Caco-2 (cell line): ENCODE measurements at regions of chr2 and their contacts with region 1.

Region 1: GRCh38 chr2:108927936-108928659 is 60.9 kb downstream of the EDAR start:
- DNase-seq: peak; percentile 60 to 71
- H3K4me3 ChIP-seq: no peak overlapping the region
- H3K4me3 Mint-ChIP-seq: no peak overlapping the region
- H3K27ac Mint-ChIP-seq: no peak overlapping the region
- H3K4me1 ChIP-seq: no peaks in the 10 kb centered on the region
- H3K4me1 Mint-ChIP-seq: peaks cover 8% of the 10 kb centered on the region
- H3K27me3 ChIP-seq: no peaks in the 10 kb centered on the region
- H3K27me3 Mint-ChIP-seq: no peaks in the 10 kb centered on the region
- CTCF ChIP-seq: peak; percentile 82 to 93

Region 2: GRCh38 chr2:108988796-108989713 is 61.0 kb after region 1 on chr2 and contains the start of gene EDAR:
- CTCF ChIA-PET with region 1: interaction called, 4 read pairs
- POLR2A ChIA-PET with region 1: no interaction called
- intact Hi-C with region 1: loop called (anchors 1 kb)
- DNase-seq: peak; percentile 76 to 82
- H3K4me3 ChIP-seq: peak within 1 kb of the TSS; percentile 31
- H3K4me3 Mint-ChIP-seq: peak within 1 kb of the TSS; percentile 71
- H3K27ac Mint-ChIP-seq: no peak within 1 kb of the TSS
- H3K4me1 ChIP-seq: peaks cover 30% of the 10 kb centered on the region
- H3K4me1 Mint-ChIP-seq: peaks cover 34% of the 10 kb centered on the region
- H3K27me3 ChIP-seq: no peaks in the 10 kb centered on the region
- H3K27me3 Mint-ChIP-seq: no peaks in the 10 kb centered on the region
- CTCF ChIP-seq: peak; percentile 67 to 92
- total RNA-seq, gene EDAR: 0.82 and 0.95 TPM in 2 replicates

Region 3: DNA sequence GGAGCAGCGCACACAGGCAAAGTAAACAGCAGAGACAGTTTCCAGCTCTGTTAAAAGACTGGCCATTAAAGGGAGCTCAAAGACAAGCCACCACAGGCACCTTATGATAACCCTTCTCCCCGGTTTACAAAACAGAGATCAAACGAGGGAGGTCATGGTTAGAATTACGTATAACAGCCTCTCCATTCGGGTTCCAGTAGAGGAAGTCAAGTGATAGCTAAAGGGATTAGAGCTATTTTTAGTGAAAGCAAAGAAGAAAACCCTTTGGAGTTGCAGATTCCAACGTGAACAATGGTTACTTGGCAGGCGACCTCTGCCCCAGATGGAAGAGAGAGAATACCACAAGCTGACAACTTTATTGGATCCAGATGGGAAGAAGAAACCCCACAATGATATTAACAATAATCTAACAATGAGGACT is 92.1 kb after region 1 on chr2:
- CTCF ChIA-PET with region 1: no interaction called
- POLR2A ChIA-PET with region 1: no interaction called
- intact Hi-C with region 1: no loop called
- DNase-seq: peak; percentile 45 to 47
- H3K4me3 ChIP-seq: no peak overlapping the region
- H3K4me3 Mint-ChIP-seq: peak overlapping the region; percentile 19
- H3K27ac Mint-ChIP-seq: peak overlapping the region; percentile 26
- H3K4me1 ChIP-seq: peaks cover 31% of the 10 kb centered on the region
- H3K4me1 Mint-ChIP-seq: peaks cover 10% of the 10 kb centered on the region
- H3K27me3 ChIP-seq: no peaks in the 10 kb centered on the region
- H3K27me3 Mint-ChIP-seq: no peaks in the 10 kb centered on the region
- CTCF ChIP-seq: no peak

Region 4: GRCh38 chr2:109062859-109063700 is 135.0 kb after region 1 on chr2:
- CTCF ChIA-PET with region 1: no interaction called
- POLR2A ChIA-PET with region 1: no interaction called
- intact Hi-C with region 1: loop called (anchors 5 kb)
- DNase-seq: peak in 1 of 2 experiments; percentile 18
- H3K4me3 ChIP-seq: no peak overlapping the region
- H3K4me3 Mint-ChIP-seq: no peak overlapping the region
- H3K27ac Mint-ChIP-seq: peak overlapping the region; percentile 75
- H3K4me1 ChIP-seq: peaks cover 67% of the 10 kb centered on the region
- H3K4me1 Mint-ChIP-seq: peaks cover 45% of the 10 kb centered on the region
- H3K27me3 ChIP-seq: no peaks in the 10 kb centered on the region
- H3K27me3 Mint-ChIP-seq: no peaks in the 10 kb centered on the region
- CTCF ChIP-seq: no peak

Region 5: GRCh38 chr2:109208081-109208950 is 280.2 kb after region 1 on chr2:
- CTCF ChIA-PET with region 1: no interaction called
- POLR2A ChIA-PET with region 1: no interaction called
- intact Hi-C with region 1: loop called (anchors 1 kb)
- DNase-seq: no peak
- H3K4me3 ChIP-seq: no peak overlapping the region
- H3K4me3 Mint-ChIP-seq: no peak overlapping the region
- H3K27ac Mint-ChIP-seq: no peak overlapping the region
- H3K4me1 ChIP-seq: peaks cover 14% of the 10 kb centered on the region
- H3K4me1 Mint-ChIP-seq: peaks cover 11% of the 10 kb centered on the region
- H3K27me3 ChIP-seq: no peaks in the 10 kb centered on the region
- H3K27me3 Mint-ChIP-seq: peaks cover 11% of the 10 kb centered on the region
- CTCF ChIP-seq: no peak